Activated CD4-positive, alpha-beta T cell treated with anti-CD3 and anti-CD28 coated beads, Interleukin-2, amount 10 ng/mL, durations not matched to agents 24 days and 14 days (primary cell): ENCODE measurements at regions of chr18 and their contacts with region 1.

Region 1: DNA sequence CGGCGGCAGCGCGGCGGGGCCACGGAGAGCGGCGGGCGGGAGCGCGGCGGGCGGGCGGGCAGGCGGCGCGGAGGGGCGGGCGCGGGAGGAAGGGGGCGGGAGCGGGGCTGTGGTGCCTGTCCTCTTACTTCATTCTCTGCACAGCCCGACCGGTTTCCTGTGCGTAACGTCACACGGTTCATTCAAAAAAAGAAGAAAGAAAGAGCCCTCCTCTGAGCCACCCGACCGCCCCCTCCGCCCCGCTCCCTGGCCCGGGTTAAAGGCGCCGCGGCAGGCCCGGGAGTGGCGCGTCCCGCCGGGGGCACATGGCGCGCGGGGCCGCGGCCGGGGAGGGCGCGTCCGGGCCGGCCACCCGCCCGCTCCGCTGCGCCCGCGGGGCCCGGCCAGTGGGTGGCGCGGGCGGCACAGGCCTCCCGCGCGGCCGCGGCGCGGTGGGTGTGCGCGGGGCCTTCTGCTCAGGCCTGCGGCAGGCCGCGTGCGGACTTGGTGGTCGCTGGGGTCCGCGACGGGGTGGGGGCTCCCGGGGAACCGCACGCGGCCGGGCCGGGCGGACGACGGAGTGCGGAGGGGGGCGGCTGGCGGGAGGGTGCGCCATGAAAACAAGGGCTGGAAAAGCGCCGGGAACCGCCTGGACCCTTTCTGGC is 599 bp upstream of the BCL2 start:
- DNase-seq: peak; percentile 96
- H3K4me3 Mint-ChIP-seq: peak overlapping the region; percentile 99
- H3K27ac Mint-ChIP-seq: peak overlapping the region; percentile 97
- H3K4me1 Mint-ChIP-seq: peaks cover 25% of the 10 kb centered on the region
- H3K27me3 Mint-ChIP-seq: no peaks in the 10 kb centered on the region

Region 2: GRCh38 chr18:63016270-63016669 is 303.9 kb before region 1 on chr18:
- intact Hi-C with region 1: loop called (anchors 1 kb)
- DNase-seq: peak; percentile 83
- H3K4me3 Mint-ChIP-seq: no peak overlapping the region
- H3K27ac Mint-ChIP-seq: no peak overlapping the region
- H3K4me1 Mint-ChIP-seq: no peaks in the 10 kb centered on the region
- H3K27me3 Mint-ChIP-seq: peaks cover 59% of the 10 kb centered on the region

Region 3: GRCh38 chr18:63131106-63131958 is 188.8 kb before region 1 on chr18:
- intact Hi-C with region 1: loop called (anchors 1 kb)
- DNase-seq: peak; percentile 86
- H3K4me3 Mint-ChIP-seq: no peak overlapping the region
- H3K27ac Mint-ChIP-seq: peak overlapping the region; percentile 21
- H3K4me1 Mint-ChIP-seq: peaks cover 41% of the 10 kb centered on the region
- H3K27me3 Mint-ChIP-seq: no peaks in the 10 kb centered on the region

Region 4: GRCh38 chr18:63216516-63217311 is 103.5 kb before region 1 on chr18:
- intact Hi-C with region 1: loop called (anchors 1 kb)
- DNase-seq: peak; percentile 79
- H3K4me3 Mint-ChIP-seq: peak overlapping the region; percentile 78
- H3K27ac Mint-ChIP-seq: peak overlapping the region; percentile 90
- H3K4me1 Mint-ChIP-seq: peaks cover 79% of the 10 kb centered on the region
- H3K27me3 Mint-ChIP-seq: no peaks in the 10 kb centered on the region

Region 5: DNA sequence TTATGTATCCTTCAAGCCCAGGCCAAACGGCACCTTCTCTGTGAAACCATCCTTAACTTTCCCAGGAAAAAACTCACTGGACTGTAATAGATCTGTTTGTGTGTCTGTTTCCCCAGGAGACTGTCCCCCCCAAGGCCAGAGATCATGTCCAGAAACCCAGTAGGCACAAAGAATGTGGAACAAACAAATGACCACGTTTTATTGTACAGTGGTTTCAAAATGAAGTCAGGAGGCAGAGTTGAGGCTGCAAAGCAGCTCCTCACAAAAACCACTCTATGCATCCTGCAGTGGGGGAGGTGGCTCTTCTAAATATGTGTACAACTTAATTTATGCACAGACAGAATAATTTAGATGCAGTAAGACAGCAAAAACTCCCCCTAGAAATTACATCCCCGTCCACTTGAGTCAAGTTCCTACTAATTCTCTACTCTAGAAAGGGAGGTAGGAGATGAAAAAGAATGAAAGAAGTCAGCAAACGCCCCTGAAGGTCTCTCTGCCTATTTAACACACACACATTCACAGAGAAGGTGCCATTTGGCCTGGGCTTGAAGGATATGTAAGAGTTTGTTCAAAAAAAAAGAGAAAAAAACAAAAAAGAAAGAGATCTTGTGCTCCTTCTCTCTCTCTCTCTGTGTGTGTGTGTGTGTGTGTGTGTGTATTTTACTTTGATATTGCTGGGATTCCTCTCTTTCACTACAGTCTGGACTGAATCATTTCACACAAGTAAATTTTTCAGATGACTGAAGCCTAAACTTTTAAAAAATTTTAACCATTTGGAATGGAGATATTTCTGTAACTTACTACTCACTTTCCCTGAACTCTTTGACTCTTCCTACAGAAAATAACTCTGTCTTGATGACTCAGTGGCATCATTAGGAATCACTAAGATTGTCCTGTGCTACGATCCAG is 20.1 kb before region 1 on chr18:
- intact Hi-C with region 1: loop called (anchors 1 kb)
- DNase-seq: peak; percentile 81
- H3K4me3 Mint-ChIP-seq: peak overlapping the region; percentile 81
- H3K27ac Mint-ChIP-seq: peak overlapping the region; percentile 98
- H3K4me1 Mint-ChIP-seq: peaks cover 81% of the 10 kb centered on the region
- H3K27me3 Mint-ChIP-seq: no peaks in the 10 kb centered on the region

Region 6: DNA sequence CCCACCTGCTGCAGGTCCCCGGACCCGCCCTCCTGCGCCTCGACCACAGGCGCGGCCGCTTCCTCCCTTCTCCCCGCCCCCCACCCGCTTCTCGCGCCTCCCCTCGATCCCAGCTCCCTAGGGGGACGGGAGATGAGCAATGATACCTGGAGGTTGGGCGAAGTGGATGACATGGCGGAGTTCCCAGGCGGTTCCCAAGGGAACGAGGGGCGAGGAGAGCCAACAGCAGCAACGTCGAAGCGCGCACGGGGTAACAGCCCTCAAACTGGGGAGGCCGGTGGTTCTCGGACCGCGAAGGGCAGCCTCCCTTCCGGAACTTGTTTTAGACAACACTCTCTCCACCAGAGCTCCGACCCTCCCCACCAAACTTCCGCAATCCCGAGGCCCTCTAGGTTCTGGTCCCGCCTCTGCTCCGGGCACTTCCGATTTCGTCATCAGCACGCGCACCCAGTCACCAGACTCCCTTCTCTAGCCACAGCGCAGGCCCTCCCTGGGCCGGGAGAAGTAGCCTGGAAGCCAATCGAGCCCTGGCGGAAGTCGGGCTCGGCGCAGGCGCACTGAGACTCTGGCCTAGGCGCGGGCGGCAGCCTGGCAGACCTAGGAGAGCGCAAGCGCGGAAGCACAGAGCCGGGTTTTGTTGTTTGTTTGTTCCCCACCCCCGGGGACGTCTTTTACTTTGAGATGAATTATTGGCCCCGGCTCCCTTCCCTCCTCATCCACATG is 102.1 kb after region 1 on chr18 and contains the start of gene VPS4B:
- intact Hi-C with region 1: loop called (anchors 2 kb)
- DNase-seq: peak; percentile 100
- H3K4me3 Mint-ChIP-seq: peak within 1 kb of the TSS; percentile 98
- H3K27ac Mint-ChIP-seq: peak within 1 kb of the TSS; percentile 92
- H3K4me1 Mint-ChIP-seq: peaks cover 29% of the 10 kb centered on the region
- H3K27me3 Mint-ChIP-seq: peaks cover 2% of the 10 kb centered on the region
- total RNA-seq, gene VPS4B: 50.8 and 62.1 TPM in 2 replicates

Region 7: DNA sequence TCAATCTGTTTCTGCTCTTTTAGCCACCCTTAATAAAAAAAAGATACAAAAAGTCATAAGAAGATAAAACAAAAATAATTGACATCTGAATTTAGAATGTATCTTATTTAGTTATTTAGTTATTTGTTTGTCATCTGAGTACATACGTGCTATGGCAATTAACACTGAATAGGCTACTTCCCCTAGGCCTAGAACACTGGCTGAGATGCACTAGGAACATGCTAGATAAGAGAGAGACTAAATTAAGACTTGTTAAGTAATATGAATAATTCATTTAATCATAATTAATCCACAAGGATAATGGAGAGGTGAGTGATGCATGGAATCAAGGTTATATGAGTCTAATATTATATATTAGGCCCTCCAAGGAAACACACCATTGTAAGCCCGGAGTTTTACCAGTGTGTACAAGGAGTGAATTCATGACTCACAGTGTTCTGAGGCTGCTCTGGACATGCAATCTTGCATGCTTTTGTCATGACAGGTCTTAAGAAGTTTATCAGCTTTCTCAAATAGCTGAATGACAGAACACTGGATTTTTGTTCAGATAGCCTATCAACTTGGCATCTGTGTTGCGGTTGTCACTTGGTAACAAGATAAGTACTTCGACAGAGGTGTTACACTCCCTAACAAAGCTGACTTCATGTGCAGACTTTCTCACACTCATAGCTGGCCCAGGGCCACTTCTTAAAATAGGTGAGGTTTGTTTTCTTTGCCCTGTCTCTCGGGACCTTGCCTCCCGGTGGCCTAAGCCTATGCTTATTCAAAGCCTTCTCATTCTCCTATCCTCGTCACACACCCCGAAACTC is 562.4 kb after region 1 on chr18:
- intact Hi-C with region 1: no loop called
- DNase-seq: peak; percentile 31
- H3K4me3 Mint-ChIP-seq: no peak overlapping the region
- H3K27ac Mint-ChIP-seq: no peak overlapping the region
- H3K4me1 Mint-ChIP-seq: peaks cover 8% of the 10 kb centered on the region
- H3K27me3 Mint-ChIP-seq: peaks cover 13% of the 10 kb centered on the region